Naive thymus-derived CD4-positive, alpha-beta T cell (primary cell): ENCODE measurements at regions of chr19 and their contacts with region 1.

Region 1: DNA sequence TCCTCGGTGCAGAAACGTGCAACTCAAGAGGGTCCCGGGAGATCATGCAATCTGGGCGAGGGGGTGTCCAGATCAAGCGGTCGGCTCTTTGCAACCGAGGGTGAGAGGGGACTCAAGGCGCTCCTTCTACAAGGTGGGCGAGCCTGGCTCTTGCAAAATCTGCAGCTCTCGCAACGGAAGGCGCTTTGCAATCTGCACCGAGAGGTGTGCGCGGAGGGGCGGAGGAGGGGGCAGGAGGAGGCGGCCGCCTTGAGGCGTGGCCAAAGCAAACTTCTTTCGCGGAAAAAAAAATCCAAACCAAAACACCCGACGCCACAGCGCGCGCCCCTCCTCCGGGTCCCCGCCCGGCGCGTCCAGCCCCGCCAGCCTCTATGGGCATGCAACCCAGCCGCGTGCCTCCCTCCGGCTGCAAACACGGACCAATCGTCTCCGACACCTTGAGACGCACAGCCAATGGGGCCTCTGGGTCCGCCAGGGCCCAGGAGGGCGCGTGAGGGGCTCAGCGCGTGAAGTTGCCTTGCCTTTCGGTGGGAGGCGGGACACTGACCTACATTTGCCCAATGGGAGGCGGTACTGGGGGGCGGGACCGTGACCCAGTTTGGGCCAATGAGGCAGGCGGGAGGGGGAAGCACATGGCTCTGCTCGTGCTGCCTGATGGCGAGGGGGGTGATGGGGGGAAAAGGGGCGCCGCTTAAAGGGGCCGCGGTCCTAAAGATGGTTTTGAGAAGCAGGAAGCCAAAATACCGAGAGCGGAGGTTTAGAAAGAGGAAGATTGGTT is at the start of gene DBP:
- DNase-seq: peak; percentile 91 to 100 (median 100)
- ATAC-seq: peak; percentile 83
- H3K4me3 ChIP-seq: peak within 1 kb of the TSS; percentile 89
- H3K4me3 Mint-ChIP-seq: peak within 1 kb of the TSS; percentile 87 to 100 (median 98)
- H3K27ac ChIP-seq: peak within 1 kb of the TSS; percentile 90
- H3K27ac Mint-ChIP-seq: peak within 1 kb of the TSS; percentile 97 to 100 (median 98)
- H3K4me1 ChIP-seq: peaks cover 33 to 38% of the 10 kb centered on the region in 2 donors
- H3K4me1 Mint-ChIP-seq: peaks cover 13 to 46% (median 41%) of the 10 kb centered on the region in 7 donors
- H3K27me3 ChIP-seq: no peaks in the 10 kb centered on the region
- H3K27me3 Mint-ChIP-seq: peaks cover 0 to 8% (median 0%) of the 10 kb centered on the region in 5 donors
- total RNA-seq, gene DBP: 11.9 to 79.9 (median 33.2) TPM

Region 2: DNA sequence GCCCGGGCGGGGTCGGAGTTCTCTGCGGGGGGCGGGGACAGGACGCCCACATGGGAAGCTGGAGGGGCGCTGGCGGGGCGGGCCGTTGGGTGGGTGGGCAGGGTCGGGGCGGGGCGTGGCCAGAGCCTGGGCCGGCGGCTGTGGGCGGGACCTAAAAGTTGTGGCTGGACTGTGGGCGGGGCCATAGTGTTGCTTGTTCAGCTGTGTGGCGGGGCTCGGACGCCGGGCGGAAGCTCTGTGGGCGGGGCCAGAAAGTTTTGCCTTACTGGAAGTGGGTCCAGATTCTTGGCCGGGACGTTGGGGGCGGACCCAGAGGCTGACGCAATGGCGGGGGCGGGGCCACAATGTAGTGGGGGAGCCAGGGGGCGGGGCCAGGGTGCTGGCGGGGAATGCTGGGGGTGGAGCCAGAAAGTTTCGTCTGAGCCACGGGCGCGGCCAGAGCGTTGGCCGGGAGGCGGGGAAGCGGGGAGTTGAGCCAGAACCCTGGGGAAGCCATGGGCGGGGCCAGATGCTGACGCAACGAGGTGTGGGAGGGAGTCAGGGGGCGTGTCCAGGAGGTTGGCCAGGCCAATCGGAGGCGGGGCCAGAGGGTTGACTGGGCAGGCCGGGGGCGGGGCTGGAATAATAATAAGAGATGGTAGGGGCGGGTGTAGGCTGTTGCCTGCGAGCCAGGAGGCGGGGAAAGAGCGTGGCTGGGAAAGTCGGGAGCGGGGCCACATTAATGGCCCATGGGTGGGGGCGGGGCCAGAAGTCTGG is 1380.5 kb before region 1 on chr19:
- CTCF ChIA-PET with region 1: no interaction called
- POLR2A ChIA-PET with region 1: no interaction called
- intact Hi-C with region 1: loop called (anchors 5 kb)
- DNase-seq: peak; percentile 94 to 100 (median 96)
- ATAC-seq: peak; percentile 88
- H3K4me3 ChIP-seq: peak overlapping the region; percentile 65
- H3K4me3 Mint-ChIP-seq: peak overlapping the region; percentile 85 to 97 (median 90)
- H3K27ac ChIP-seq: peak overlapping the region; percentile 90
- H3K27ac Mint-ChIP-seq: peak overlapping the region; percentile 90 to 99 (median 97)
- H3K4me1 ChIP-seq: peaks cover 15 to 24% of the 10 kb centered on the region in 2 donors
- H3K4me1 Mint-ChIP-seq: peaks cover 35 to 46% (median 39%) of the 10 kb centered on the region in 7 donors
- H3K27me3 ChIP-seq: no peaks in the 10 kb centered on the region
- H3K27me3 Mint-ChIP-seq: peaks cover 0 to 2% (median 0%) of the 10 kb centered on the region in 5 donors

Region 3: DNA sequence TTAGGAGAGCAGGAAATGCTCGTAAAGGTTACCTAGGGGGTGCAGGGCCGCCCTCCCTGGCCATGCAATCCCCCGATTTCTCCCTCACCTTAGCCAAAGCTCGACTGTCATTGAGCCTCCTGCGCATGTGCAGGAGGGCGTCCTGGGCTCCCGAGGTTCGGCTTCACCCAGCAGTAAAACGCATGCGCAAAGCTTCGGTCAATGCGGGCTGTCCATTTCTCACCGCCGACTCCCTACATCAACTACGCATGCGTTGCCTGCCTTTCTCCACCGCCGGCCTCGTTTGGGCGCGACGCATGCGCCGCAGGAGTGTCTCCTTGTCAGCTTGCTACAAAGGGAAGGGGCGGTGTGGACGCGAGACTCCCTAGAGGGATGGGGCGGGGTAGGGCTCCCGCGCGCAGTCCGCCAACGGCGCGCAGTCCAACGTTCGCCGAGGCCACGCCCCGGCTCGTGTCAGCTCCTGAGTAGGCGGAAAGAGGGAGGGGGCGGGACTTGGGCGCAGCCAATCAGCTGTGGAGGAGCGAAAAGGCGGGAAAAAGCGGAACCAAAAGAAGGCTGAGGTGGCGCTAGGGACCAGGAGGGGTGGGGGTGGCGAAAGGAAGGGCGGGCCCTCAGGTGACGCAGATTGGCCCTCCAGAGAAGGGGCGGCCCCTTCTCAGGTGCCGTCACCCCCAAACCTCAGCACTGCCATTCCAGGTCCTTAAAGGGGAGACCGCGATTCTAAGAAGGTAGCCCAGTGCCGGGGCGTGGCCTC is 273.4 kb before region 1 on chr19 and contains the starts of genes SYNGR4 and TMEM143:
- CTCF ChIA-PET with region 1: no interaction called
- POLR2A ChIA-PET with region 1: no interaction called
- intact Hi-C with region 1: loop called in 1 of 2 experiments (anchors 1 kb)
- DNase-seq: peak; percentile 91 to 100 (median 99)
- ATAC-seq: peak; percentile 96
- H3K4me3 ChIP-seq: peak within 1 kb of the TSS; percentile 87
- H3K4me3 Mint-ChIP-seq: peak within 1 kb of the TSS; percentile 80 to 97 (median 92)
- H3K27ac ChIP-seq: peak within 1 kb of the TSS; percentile 86
- H3K27ac Mint-ChIP-seq: peak within 1 kb of the TSS; percentile 89 to 98 (median 95)
- H3K4me1 ChIP-seq: peaks cover 9 to 13% of the 10 kb centered on the region in 2 donors
- H3K4me1 Mint-ChIP-seq: peaks cover 0 to 28% (median 6%) of the 10 kb centered on the region in 7 donors
- H3K27me3 ChIP-seq: no peaks in the 10 kb centered on the region
- H3K27me3 Mint-ChIP-seq: peaks cover 0 to 3% (median 0%) of the 10 kb centered on the region in 5 donors
- total RNA-seq, gene SYNGR4: not detected
- total RNA-seq, gene TMEM143: 11.6 to 39.8 (median 20.1) TPM

Region 4: DNA sequence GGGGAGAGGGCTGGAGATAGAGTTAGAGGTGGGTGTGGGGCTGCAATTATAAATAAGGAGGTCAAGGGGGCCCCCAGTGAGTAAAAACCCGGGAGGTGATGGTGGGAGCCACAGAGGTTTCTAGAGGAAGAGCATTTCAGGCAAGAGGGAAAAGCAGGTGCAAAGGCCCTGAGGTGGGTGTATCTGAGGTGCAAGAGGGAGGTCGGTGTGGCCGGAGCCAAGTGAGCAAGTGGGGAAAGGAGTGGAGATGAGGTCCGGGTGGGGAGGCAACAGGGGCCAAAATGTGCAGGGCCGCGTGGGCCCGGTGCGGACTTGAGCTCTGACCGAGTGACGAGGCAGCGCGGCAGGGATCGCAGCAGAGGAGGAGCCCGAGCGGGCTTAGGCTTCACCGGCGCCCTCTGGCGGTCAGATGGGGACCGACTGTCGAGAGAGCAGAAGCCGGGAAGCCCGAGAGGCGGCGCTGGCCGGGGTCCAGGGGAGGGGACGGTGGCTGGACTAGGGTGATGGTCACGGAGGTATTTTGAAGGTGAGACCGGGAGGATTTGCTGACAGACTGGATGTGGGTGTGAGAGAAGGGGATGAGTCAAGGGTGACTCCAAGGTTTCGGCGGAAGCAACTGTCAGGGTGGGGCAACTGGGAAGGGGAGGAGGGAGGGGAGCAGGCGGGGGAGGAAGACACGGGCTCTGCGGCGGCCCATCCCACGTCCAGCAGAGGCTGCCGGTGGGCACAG is 48.5 kb before region 1 on chr19:
- CTCF ChIA-PET with region 1: no interaction called
- POLR2A ChIA-PET with region 1: interaction called, 3 read pairs
- intact Hi-C with region 1: loop called in 1 of 2 experiments (anchors 1 kb)
- DNase-seq: peak; percentile 65 to 92 (median 81)
- ATAC-seq: peak; percentile 92
- H3K4me3 ChIP-seq: no peak overlapping the region
- H3K4me3 Mint-ChIP-seq: peak overlapping the region; percentile 51 to 93 (median 78)
- H3K27ac ChIP-seq: no peak overlapping the region
- H3K27ac Mint-ChIP-seq: peak overlapping the region in 6 of 9 donors; percentile 37 to 86 (median 78)
- H3K4me1 ChIP-seq: peaks cover 0 to 3% of the 10 kb centered on the region in 2 donors
- H3K4me1 Mint-ChIP-seq: peaks cover 11 to 27% (median 15%) of the 10 kb centered on the region in 7 donors
- H3K27me3 ChIP-seq: no peaks in the 10 kb centered on the region
- H3K27me3 Mint-ChIP-seq: peaks cover 0 to 5% (median 0%) of the 10 kb centered on the region in 5 donors

Region 5: GRCh38 chr19:48713864-48714758 is 76.8 kb after region 1 on chr19:
- CTCF ChIA-PET with region 1: interaction called, 3 read pairs
- POLR2A ChIA-PET with region 1: interaction called, 3 read pairs
- intact Hi-C with region 1: loop called (anchors 1 kb)
- DNase-seq: peak; percentile 92 to 97 (median 97)
- ATAC-seq: peak; percentile 96
- H3K4me3 ChIP-seq: peak overlapping the region; percentile 95
- H3K4me3 Mint-ChIP-seq: peak overlapping the region; percentile 82 to 92 (median 88)
- H3K27ac ChIP-seq: peak overlapping the region; percentile 79
- H3K27ac Mint-ChIP-seq: peak overlapping the region; percentile 16 to 90 (median 81)
- H3K4me1 ChIP-seq: peaks cover 11 to 12% of the 10 kb centered on the region in 2 donors
- H3K4me1 Mint-ChIP-seq: peaks cover 9 to 24% (median 20%) of the 10 kb centered on the region in 7 donors
- H3K27me3 ChIP-seq: no peaks in the 10 kb centered on the region
- H3K27me3 Mint-ChIP-seq: no peaks in the 10 kb centered on the region

Region 6: DNA sequence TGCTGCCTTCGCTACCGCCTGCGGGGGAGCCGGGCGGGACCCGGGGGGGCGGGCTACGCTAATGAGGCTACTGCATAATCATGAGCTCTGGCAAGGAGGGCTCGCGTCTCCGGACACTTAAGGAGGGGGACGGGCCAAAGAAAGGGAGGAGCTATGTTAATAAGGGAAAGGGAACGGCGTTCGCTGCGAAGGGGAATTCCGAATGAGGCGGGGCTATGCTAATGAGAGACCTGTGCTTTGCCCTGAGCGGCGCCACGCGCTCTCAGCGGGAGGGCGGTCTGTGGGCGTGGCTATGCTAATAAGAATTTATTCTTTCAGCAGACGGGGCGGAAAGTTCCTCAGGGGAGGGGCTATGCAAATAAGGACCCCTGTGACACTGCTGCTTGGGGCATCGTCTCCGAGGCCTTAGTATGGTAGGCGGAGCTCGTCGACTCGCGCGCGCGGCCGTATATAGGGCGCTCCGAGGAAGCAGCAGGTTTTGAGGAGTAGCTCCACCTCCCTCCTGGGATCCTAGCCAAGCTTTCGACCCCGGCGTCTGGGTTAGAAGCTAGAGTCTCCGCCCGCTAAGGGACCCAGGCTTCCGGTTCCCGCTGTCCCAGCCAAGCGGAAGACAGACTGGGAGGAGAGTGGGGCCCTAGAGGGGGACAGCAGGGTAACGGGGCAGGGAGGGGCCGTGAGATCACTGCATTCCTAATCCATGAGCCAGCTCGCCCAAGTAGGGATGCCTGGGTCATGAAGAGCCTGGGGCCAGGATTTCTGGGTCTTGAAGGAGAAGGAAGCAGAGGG is 1002.9 kb after region 1 on chr19 and contains the start of gene RRAS:
- CTCF ChIA-PET with region 1: no interaction called
- POLR2A ChIA-PET with region 1: no interaction called
- intact Hi-C with region 1: loop called in 1 of 2 experiments (anchors 5 kb)
- DNase-seq: peak; percentile 91 to 100 (median 99)
- ATAC-seq: peak; percentile 78
- H3K4me3 ChIP-seq: peak within 1 kb of the TSS; percentile 64
- H3K4me3 Mint-ChIP-seq: peak within 1 kb of the TSS; percentile 86 to 98 (median 93)
- H3K27ac ChIP-seq: peak within 1 kb of the TSS; percentile 95
- H3K27ac Mint-ChIP-seq: peak within 1 kb of the TSS; percentile 93 to 99 (median 99)
- H3K4me1 ChIP-seq: peaks cover 27 to 40% of the 10 kb centered on the region in 2 donors
- H3K4me1 Mint-ChIP-seq: peaks cover 57 to 67% (median 63%) of the 10 kb centered on the region in 7 donors
- H3K27me3 ChIP-seq: no peaks in the 10 kb centered on the region
- H3K27me3 Mint-ChIP-seq: peaks cover 0 to 6% (median 0%) of the 10 kb centered on the region in 5 donors
- total RNA-seq, gene RRAS: 11.0 to 18.6 (median 13.8) TPM